Endothelial cell of umbilical vein (primary cell): ENCODE measurements at regions of chr15 and their contacts with region 1.

Region 1: DNA sequence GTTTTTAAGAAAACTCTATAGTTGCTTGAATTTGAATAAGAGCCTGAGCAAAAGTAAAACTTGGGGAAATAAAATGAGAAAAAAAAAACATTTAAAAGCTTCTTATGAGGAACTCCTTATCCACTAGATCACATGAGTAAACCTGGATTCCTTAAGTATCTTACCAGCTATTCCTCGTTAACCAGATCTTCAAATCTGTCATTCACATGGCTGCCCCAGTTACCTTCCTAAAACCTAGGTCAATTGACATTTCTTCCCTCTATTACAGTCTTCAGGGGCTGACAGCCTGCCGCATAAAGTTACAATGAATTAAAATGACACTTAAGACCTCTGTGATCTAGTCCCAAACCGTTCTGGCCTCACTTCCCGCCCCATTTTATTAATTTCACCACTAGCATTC is 583.6 kb downstream of the NR2F2 start:
- DNase-seq: no peak
- H3K4me3 ChIP-seq: no peak overlapping the region
- H3K27ac ChIP-seq: no peak overlapping the region
- H3K4me1 ChIP-seq: no peaks in the 10 kb centered on the region
- H3K27me3 ChIP-seq: no peaks in the 10 kb centered on the region
- CTCF ChIP-seq: no peak
- POLR2A ChIP-seq: no peak

Region 2: DNA sequence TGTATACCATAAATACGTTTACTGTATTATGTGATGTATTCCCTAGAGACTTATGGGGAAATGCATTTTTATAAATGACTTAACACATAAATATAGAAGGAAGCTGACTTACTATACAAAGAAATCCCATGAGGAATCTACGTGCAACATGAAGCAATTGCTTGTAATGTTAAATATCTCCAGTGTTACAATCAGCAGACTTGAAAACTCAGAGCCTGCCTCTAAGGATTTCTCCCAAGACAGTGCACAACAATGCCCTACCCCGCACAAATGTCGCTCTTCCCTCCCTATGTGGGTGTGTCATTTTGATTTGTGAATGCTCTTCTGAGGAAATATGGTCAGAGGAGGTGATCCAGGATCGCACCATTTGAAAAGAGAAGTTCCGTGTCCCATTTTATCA is 45.4 kb after region 1 on chr15:
- CTCF ChIA-PET with region 1: no interaction called
- POLR2A ChIA-PET with region 1: no interaction called
- dilution Hi-C with region 1: no loop called
- intact Hi-C with region 1: loop called (anchors 1 kb)
- DNase-seq: no peak
- H3K4me3 ChIP-seq: no peak overlapping the region
- H3K27ac ChIP-seq: no peak overlapping the region
- H3K4me1 ChIP-seq: no peaks in the 10 kb centered on the region
- H3K27me3 ChIP-seq: peaks cover 0 to 7% of the 10 kb centered on the region in 2 experiments
- CTCF ChIP-seq: no peak
- POLR2A ChIP-seq: no peak

Region 3: GRCh38 chr15:97215629-97216028 is 301.5 kb after region 1 on chr15:
- CTCF ChIA-PET with region 1: no interaction called
- POLR2A ChIA-PET with region 1: no interaction called
- dilution Hi-C with region 1: no loop called
- intact Hi-C with region 1: loop called (anchors 10 kb)
- DNase-seq: no peak
- H3K4me3 ChIP-seq: no peak overlapping the region
- H3K27ac ChIP-seq: no peak overlapping the region
- H3K4me1 ChIP-seq: no peaks in the 10 kb centered on the region
- H3K27me3 ChIP-seq: no peaks in the 10 kb centered on the region
- CTCF ChIP-seq: no peak
- POLR2A ChIP-seq: no peak